Activated CD4-positive, alpha-beta memory T cell treated with anti-CD3 and anti-CD28 coated beads, Interleukin-2, amount 10 ng/mL, durations not matched to agents 7 days and 5 days (primary cell): ENCODE measurements at regions of chrX and their contacts with region 1.

Region 1: DNA sequence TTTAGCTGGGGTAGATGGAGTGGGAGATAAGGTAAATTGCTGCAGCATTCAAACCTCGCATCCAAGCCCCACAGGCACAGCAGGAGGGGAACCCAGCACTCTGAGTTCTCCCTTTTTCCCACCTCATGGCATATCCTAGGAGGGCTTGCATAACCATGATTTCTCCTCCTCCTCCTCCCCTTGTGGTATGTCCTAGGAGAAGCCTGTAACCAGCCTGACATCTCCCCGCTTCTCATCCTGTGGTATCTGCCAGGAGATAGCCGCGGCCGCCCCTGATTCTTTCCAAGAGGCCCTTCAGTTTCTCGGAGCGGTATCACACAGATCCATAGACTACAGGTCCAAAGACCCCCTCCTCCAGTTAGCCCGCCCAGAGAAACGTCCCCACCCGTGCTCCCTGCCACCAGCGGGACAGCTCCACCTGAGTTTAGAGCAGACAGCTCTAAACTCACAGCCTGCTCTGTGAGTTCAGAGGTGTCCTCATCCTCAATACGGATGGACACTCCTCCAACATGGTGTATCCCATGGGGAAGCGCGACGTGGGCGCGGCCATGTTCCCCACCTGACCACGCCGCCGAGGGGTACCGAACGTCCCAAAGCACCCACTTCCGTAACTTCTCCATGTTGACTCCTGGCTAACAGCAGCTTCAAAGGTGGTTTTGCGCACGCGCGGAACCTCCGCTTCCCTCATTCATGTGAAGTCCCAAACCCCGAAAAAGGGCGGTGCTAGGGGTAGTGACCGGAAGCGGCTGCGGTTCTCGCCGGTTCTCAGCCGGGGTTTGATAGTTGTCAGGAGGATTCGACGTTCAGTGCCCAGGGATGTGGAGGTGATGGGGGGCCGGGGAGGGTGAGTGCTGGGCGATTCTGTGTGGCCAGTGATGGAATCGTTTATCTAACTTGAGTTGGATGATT is at the start of gene ZNF81:
- DNase-seq: peak; percentile 93
- H3K4me3 Mint-ChIP-seq: peak within 1 kb of the TSS; percentile 90
- H3K27ac Mint-ChIP-seq: peak within 1 kb of the TSS; percentile 88
- H3K4me1 Mint-ChIP-seq: peaks cover 23% of the 10 kb centered on the region
- H3K27me3 Mint-ChIP-seq: no peaks in the 10 kb centered on the region
- total RNA-seq, gene ZNF81: 6.4 to 8.0 TPM

Region 2: GRCh38 chrX:48021026-48021900 is 184.8 kb after region 1 on chrX:
- CTCF ChIA-PET with region 1: interaction called, 18 read pairs
- POLR2A ChIA-PET with region 1: interaction called, 10 read pairs
- DNase-seq: peak; percentile 67
- H3K4me3 Mint-ChIP-seq: peak overlapping the region; percentile 78
- H3K27ac Mint-ChIP-seq: peak overlapping the region; percentile 79
- H3K4me1 Mint-ChIP-seq: peaks cover 13% of the 10 kb centered on the region
- H3K27me3 Mint-ChIP-seq: peaks cover 2% of the 10 kb centered on the region

Region 3: GRCh38 chrX:48028091-48028490 is 191.7 kb after region 1 on chrX:
- CTCF ChIA-PET with region 1: interaction called, 18 read pairs
- POLR2A ChIA-PET with region 1: no interaction called
- DNase-seq: no peak
- H3K4me3 Mint-ChIP-seq: no peak overlapping the region
- H3K27ac Mint-ChIP-seq: no peak overlapping the region
- H3K4me1 Mint-ChIP-seq: peaks cover 4% of the 10 kb centered on the region
- H3K27me3 Mint-ChIP-seq: no peaks in the 10 kb centered on the region